ENCODE measurements at regions of chr11 and their contacts with region 1.

Region 1: GRCh38 chr11:65134386-65135253 is at the start of gene SYVN1:
- DNase-seq: peak; percentile 93
- H3K4me3 Mint-ChIP-seq: peak within 1 kb of the TSS; percentile 99
- H3K27ac Mint-ChIP-seq: peak within 1 kb of the TSS; percentile 99
- H3K4me1 Mint-ChIP-seq: peaks cover 27% of the 10 kb centered on the region
- H3K27me3 Mint-ChIP-seq: no peaks in the 10 kb centered on the region
- total RNA-seq, gene SYVN1: 40.5 to 42.2 TPM

Region 2: GRCh38 chr11:65032216-65032615 is 102.4 kb before region 1 on chr11:
- CTCF ChIA-PET with region 1: no interaction called
- POLR2A ChIA-PET with region 1: no interaction called
- DNase-seq: no peak
- H3K4me3 Mint-ChIP-seq: no peak overlapping the region
- H3K27ac Mint-ChIP-seq: no peak overlapping the region
- H3K4me1 Mint-ChIP-seq: peaks cover 15% of the 10 kb centered on the region
- H3K27me3 Mint-ChIP-seq: no peaks in the 10 kb centered on the region

Region 3: DNA sequence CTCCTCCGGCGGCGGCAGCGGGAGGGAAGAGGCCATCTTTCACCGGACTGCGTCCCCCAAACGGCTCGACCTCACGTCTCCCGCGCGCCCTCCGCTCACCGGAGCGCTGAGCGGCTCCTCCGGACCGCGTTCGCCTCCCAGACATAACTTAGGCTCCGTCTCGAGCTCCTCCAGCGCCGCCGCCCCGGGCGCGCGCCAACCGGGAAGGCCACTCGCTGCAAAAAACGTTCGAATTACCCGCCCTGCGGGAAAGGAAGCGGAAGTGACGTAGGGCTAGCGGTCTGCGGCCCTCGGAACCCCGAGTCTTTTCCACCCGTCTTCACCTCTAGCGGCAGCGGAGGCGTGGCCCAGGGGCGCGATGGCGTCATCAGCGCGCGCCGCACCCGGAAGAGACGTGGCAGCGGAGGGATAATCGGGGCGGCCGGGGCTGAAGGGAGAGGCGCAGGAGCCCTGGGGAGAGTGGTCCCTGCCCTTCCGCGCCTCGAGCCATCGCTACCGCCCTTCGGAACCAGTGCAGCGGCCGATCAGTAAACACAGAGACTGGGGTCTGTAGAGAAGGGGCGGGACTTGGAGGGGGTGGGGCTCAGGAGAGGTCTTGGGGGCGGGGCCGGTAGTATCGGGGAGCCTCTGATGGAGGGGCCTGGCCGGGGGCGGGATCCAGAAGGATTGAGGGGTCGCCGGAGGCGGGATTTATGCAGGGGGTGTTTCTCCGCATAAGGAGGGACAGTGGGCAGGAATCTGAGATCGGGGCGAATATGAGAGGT is 50.6 kb before region 1 on chr11 and contains the starts of genes CDCA5 and ZFPL1:
- CTCF ChIA-PET with region 1: no interaction called
- POLR2A ChIA-PET with region 1: no interaction called
- DNase-seq: peak; percentile 97
- H3K4me3 Mint-ChIP-seq: peak within 1 kb of the TSS; percentile 98
- H3K27ac Mint-ChIP-seq: peak within 1 kb of the TSS; percentile 99
- H3K4me1 Mint-ChIP-seq: peaks cover 51% of the 10 kb centered on the region
- H3K27me3 Mint-ChIP-seq: no peaks in the 10 kb centered on the region
- total RNA-seq, gene CDCA5: 105 to 109 TPM
- total RNA-seq, gene ZFPL1: 27.2 to 29.8 TPM

Region 4: DNA sequence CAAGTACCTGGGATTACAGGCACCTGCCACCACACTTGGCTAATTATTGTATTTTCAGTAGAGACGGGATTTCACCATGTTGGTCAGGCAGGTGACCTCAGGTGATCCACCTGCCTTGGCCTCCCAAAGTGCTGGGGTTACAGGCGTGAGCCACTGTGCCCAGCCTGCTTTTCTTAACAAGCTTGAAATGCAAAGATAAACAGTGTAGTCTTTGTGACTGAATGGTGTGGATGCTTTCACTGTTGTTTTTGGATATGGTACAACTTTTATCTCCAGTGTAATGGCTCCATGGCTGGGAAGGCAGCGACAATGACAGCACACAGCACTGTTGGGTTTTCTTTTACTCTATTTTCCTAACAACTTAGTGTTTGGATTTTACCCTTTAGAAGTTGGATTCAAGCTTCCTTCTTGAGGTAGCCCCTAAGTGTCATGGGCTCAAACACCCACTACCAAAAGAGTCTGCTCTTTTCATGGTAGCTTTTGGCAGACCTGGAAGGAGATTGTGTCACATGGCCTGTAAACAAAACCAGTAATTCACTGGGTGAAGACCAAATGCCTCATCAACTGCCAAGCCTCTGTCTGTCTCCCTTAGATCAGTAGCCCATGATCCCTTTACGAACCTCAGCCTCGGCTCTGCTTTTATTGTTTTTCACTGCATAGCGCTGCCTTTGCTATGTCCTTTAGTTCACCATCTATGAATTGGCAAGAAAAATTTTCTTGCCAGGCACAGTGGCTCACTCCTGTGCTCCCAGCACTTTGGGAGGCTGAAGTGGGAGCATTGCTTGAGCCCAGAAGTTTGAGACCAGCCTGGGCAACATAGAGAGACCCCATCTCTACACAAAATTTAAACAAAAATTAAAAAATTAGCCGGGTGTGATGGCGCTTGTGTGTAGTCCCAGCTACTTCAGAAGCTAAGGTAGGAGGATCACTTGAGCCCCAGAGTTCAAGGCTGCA is 32.2 kb before region 1 on chr11:
- CTCF ChIA-PET with region 1: no interaction called
- POLR2A ChIA-PET with region 1: no interaction called
- DNase-seq: no peak
- H3K4me3 Mint-ChIP-seq: no peak overlapping the region
- H3K27ac Mint-ChIP-seq: no peak overlapping the region
- H3K4me1 Mint-ChIP-seq: peaks cover 31% of the 10 kb centered on the region
- H3K27me3 Mint-ChIP-seq: no peaks in the 10 kb centered on the region

Region 5: GRCh38 chr11:65148657-65149056 is 14.0 kb after region 1 on chr11:
- CTCF ChIA-PET with region 1: interaction called, 12 read pairs
- POLR2A ChIA-PET with region 1: no interaction called
- DNase-seq: no peak
- H3K4me3 Mint-ChIP-seq: no peak overlapping the region
- H3K27ac Mint-ChIP-seq: no peak overlapping the region
- H3K4me1 Mint-ChIP-seq: peaks cover 18% of the 10 kb centered on the region
- H3K27me3 Mint-ChIP-seq: peaks cover 23% of the 10 kb centered on the region

Measured in activated CD4-positive, alpha-beta T cell treated with anti-CD3 and anti-CD28 coated beads, Interleukin-2, amount 10 ng/mL, durations not matched to agents 7 days and 5 days (primary cell).